Activated naive CD4-positive, alpha-beta T cell treated with anti-CD3 and anti-CD28 coated beads for 36 hours (primary cell): ENCODE measurements at regions of chr17 and their contacts with region 1.

Region 1: DNA sequence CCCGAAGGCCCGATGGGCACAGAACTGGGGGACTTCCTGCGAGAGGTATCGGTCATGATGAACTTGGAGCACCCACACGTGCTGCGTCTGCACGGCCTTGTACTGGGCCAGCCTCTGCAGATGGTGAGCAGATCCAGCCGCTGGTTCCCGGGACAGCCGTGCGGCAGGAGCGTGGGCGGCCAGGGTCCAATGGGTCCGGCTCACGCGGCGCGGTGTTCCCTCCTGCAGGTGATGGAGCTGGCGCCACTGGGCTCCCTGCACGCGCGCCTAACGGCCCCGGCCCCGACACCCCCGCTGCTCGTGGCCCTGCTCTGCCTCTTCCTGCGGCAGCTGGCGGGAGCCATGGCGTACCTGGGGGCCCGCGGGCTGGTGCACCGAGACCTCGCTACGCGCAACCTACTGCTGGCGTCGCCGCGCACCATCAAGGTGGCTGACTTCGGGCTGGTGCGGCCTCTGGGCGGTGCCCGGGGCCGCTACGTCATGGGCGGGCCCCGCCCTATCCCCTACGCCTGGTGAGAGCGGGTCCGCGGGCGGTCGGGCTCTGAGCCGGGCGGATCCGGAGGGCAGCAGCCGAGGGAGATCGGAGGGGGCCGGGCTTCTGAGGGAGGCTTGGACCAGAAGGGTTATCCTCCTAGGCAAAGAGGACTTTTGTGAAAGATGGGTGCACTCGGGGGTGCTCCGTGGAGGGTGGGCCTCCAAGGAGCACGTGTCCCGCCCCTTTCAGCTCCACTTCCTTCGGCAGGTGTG is 3.0 kb downstream of the TNK1 start:
- DNase-seq: peak; percentile 74
- H3K4me3 Mint-ChIP-seq: peak overlapping the region; percentile 70
- H3K27ac Mint-ChIP-seq: peak overlapping the region; percentile 47
- H3K4me1 Mint-ChIP-seq: peaks cover 4% of the 10 kb centered on the region
- H3K27me3 Mint-ChIP-seq: peaks cover 30% of the 10 kb centered on the region

Region 2: GRCh38 chr17:7394452-7395191 is 10.7 kb after region 1 on chr17 and contains the start of gene PLSCR3:
- CTCF ChIA-PET with region 1: interaction called, 3 read pairs
- intact Hi-C with region 1: loop called (anchors 1 kb)
- DNase-seq: peak; percentile 80
- H3K4me3 Mint-ChIP-seq: peak within 1 kb of the TSS; percentile 95
- H3K27ac Mint-ChIP-seq: peak within 1 kb of the TSS; percentile 88
- H3K4me1 Mint-ChIP-seq: peaks cover 30% of the 10 kb centered on the region
- H3K27me3 Mint-ChIP-seq: no peaks in the 10 kb centered on the region
- total RNA-seq, gene PLSCR3: 58.6 to 59.4 TPM